Activated T-helper 1 cell treated with anti-CD3 and anti-CD28 coated beads, Interleukin-12 subunit alpha, Interleukin-12 subunit beta, Interleukin-2, Interleukin-4 antibody, amounts not matched to agents 30 ng/mL and 10 ng/mL and 1 ng/mL, durations not matched to agents 14 hours and 24 hours and 36 hours (primary cell): ENCODE measurements at regions of chr17 and their contacts with region 1.

Region 1: DNA sequence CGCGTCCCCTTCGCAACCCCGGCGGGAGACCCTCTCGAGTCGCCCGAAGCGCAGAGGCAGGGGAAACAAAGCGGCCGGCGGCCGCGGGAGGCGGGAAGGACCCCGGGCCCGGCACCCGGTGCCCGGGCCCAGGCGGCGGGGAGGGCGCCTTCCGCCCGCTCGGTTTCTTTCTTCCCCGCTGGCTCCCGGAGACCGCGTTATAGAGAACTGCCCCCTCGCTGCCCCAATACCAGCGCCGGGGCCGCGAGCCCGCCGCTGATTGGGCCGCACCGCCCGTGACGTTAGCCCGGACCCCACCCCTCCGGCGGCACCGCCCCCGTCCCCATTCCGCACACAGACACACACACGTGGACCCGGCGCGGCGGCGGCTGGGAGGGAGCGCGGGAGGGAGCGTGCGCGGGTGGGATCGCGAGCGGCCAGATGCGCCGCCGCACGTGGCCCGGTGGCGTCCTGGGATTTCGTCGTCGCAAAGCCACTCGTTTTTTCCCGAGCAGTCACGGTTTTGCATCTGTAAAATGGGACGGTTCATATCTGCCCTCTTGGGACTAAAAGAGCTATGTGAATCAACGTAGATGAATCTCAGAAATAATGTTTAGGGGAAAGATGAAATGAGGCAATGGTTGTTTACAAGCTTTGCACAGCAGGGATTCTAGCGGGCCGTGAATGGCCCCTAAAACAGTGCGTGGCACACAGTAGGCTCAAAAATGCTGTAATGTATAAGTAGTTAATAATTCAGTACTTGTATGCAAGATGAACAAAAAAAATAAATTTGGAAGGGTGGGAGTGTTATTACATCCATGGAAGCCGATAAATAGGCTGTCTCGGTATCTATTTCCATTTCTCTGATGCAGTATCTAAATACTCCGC is at the start of gene EPOP:
- DNase-seq: peak; percentile 90
- H3K4me3 Mint-ChIP-seq: peak within 1 kb of the TSS; percentile 71
- H3K27ac Mint-ChIP-seq: peak within 1 kb of the TSS; percentile 86
- H3K4me1 Mint-ChIP-seq: peaks cover 45% of the 10 kb centered on the region
- H3K27me3 Mint-ChIP-seq: peaks cover 22% of the 10 kb centered on the region
- total RNA-seq, gene EPOP: 56.5 and 58.8 TPM in 2 replicates

Region 2: DNA sequence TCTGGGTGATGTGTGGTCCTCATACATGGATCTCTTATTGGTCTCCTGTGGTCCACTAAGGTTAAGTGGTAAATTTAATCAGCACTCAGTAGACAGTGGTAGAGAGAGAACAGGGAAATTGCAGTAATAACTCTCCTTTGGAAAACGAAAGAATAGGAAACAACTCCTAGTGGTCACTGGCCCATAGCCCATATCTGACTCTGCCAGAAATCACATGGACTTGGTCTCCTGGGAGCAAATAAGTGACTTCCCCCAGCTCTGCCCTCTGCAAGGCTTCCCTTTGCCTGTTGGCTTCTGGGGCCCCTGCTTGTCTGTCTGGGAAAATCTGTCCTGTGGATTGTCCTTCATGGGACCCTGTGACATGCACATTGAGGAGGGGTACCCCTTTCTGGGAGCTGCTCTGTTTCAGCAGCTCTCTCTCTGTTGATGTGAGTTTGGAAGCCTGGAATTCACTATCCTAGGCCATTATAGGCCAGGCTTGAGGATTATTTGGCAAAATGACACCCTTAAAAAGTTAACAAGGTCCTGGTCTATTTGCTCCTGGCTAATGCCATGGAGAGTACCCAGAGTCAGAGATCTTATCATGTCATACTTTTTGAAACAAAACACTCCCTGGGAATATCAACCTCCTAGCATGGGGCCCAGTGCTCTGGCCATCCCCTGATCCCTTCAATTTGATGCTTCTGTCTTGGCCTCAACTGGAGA is 872.1 kb before region 1 on chr17:
- intact Hi-C with region 1: no loop called
- DNase-seq: no peak
- H3K4me3 Mint-ChIP-seq: no peak overlapping the region
- H3K27ac Mint-ChIP-seq: no peak overlapping the region
- H3K4me1 Mint-ChIP-seq: no peaks in the 10 kb centered on the region
- H3K27me3 Mint-ChIP-seq: peaks cover 14% of the 10 kb centered on the region

Region 3: DNA sequence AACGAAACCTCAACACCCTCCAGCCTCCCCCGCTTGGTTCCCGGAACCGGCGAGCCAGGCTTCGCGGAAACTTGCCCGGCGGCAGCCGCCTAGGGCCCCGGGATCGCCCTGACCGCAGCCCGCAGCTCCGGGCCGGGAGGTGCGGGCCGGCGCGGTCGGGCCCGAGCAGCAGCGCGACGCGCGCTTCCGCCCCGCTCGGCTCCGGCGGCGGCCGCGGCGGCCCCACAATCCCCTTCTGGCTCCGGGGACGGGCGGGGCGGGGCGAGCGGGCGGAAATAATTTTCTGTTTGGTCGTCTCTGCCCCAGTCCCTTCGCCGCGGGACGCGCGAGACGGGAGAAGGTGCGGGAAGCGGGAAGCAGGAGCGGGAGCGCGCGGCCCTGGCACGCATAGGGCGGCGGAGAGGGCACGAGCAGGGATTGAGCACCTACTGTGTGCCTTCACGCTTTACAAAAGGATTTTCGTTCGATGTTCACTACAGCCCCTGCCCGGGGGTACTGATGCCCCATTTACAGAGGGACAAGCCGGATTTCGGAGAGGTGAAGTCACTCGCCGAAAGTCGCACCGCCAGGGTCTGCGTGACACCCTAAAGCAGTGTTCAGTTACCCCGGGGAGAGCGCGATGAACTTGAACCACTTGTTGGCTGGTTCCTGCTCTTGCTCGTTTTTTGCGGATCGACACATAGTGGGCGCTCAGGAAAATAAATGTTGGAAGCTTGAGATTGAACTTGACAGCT is 27.4 kb after region 1 on chr17:
- intact Hi-C with region 1: loop called (anchors 1 kb)
- DNase-seq: peak; percentile 75
- H3K4me3 Mint-ChIP-seq: peak overlapping the region; percentile 97
- H3K27ac Mint-ChIP-seq: peak overlapping the region; percentile 99
- H3K4me1 Mint-ChIP-seq: peaks cover 65% of the 10 kb centered on the region
- H3K27me3 Mint-ChIP-seq: no peaks in the 10 kb centered on the region

Region 4: DNA sequence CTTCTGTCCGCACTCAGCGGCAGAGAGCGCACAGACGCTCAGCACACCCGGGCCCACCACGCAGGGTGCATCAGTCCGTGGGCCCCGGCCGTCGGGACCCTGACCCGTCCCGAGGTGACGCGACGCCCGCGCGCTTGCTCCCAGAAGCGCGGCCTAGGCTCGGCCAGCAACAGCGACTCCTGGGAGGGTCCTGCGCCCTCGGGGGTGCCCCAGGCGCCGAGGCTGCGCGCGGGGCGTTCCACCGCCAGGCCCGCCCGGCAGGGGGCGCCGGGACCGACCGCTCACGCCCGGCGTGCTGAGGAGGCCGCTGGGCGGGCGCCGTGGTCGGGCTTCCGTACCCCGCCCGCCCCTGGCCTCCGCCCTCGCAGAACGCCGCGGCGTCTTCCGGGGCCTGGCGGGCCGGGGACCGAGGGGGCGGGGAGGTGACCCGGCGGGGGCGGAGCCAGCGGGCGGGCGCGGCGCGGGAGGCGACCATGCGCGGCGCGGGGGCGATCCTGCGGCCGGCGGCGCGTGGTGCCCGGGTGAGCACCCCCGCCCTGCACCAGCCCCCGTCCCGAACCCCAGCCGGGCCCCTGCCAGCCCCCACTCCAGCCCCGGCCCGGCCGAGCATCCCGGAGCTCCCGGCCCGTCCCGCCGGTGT is 55.0 kb after region 1 on chr17 and contains the start of gene CISD3:
- intact Hi-C with region 1: loop called (anchors 1 kb)
- DNase-seq: peak; percentile 88
- H3K4me3 Mint-ChIP-seq: peak within 1 kb of the TSS; percentile 94
- H3K27ac Mint-ChIP-seq: peak within 1 kb of the TSS; percentile 97
- H3K4me1 Mint-ChIP-seq: peaks cover 82% of the 10 kb centered on the region
- H3K27me3 Mint-ChIP-seq: peaks cover 2% of the 10 kb centered on the region
- total RNA-seq, gene CISD3: 39.2 and 41.4 TPM in 2 replicates

Region 5: DNA sequence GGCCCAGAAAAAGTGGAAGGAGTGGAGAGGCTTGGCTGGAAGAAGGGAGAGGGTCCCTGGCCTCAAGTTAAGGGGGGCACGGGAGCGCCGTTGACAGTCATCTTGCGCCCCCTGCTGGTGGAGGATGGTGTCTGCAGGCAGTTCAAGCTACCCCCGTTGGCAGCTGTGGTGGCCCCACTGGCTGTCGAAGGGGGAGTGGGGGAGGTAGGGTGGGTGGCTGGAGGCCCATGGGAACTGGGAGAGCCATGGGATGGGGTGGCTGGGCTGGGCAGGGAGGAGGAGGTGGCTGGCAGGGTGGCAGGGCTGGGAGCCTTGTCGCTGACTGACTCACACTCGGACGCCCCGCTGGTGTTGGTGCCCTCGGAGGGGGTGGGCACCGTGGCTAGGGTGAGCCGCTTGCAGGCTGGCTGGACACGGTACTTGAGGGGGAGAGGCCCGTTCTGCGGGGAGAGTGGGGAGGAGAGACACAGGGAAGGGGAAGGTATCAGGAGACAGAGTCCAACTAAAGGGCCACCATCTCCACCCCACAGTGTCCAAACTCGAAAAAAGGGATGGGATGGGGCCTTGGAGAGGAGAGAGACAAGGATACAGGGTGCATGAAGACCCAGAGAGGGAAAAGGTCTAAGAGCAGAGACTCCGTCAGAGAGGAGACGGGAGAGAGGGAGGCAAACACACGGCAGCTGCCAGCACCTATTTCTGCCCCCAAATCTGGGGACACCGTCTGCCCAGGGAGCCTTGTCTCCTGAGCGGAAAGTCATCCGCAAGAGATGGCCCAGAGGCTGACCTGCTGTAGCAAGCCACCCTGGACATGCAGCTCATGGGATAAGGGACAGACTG is 60.4 kb after region 1 on chr17:
- intact Hi-C with region 1: loop called (anchors 1 kb)
- DNase-seq: peak; percentile 59
- H3K4me3 Mint-ChIP-seq: no peak overlapping the region
- H3K27ac Mint-ChIP-seq: peak overlapping the region; percentile 61
- H3K4me1 Mint-ChIP-seq: peaks cover 49% of the 10 kb centered on the region
- H3K27me3 Mint-ChIP-seq: peaks cover 2% of the 10 kb centered on the region

Region 6: GRCh38 chr17:38799378-38800236 is 124.6 kb after region 1 on chr17 and contains the start of gene PIP4K2B:
- intact Hi-C with region 1: loop called (anchors 2 kb)
- DNase-seq: peak; percentile 85
- H3K4me3 Mint-ChIP-seq: peak within 1 kb of the TSS; percentile 93
- H3K27ac Mint-ChIP-seq: peak within 1 kb of the TSS; percentile 93
- H3K4me1 Mint-ChIP-seq: peaks cover 33% of the 10 kb centered on the region
- H3K27me3 Mint-ChIP-seq: no peaks in the 10 kb centered on the region
- total RNA-seq, gene PIP4K2B: 40.6 and 40.8 TPM in 2 replicates

Region 7: DNA sequence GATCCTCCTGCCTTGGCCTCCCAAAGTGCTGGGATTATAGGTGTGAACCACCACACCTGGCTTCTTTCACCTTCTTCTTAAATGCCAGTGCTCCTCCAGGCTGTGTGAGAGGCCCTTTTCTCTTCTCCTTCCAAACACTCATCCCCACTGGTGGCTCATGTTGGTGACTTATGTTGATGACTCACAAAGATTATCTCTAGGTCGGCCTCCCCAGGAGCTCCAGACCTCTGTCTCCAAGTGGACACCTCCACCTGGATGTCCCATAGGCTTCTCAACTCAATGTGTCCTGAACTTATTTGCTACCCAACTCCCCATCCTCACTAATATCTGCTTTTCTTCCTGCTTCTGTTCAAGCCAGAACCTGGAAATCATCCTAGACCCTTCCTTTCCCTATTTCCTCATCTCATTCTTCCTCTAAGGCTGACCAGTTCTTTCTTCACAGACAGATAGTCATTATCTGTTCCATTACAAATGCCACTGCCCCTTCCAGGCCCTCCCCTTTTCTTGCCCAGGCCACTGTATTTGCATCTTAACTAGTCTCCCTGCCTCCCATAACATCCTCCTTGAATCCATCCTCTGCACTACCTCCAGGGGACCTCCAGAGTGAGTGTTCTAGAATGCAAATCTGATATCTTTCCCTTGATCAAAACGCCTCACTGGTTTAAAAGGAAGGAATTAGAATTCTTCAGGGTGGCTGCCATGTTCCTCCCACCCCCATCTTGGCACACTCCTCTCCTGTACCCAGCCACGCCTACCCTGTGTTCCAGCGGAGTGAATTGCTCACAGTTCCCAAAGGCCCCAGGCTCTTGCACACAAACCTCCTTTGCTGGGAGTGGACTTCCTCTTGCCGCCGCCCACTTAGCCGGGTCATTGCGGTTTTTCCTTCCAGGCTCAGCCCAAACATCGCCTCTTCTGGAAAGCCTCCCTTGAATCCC is 327.0 kb after region 1 on chr17:
- intact Hi-C with region 1: no loop called
- DNase-seq: no peak
- H3K4me3 Mint-ChIP-seq: no peak overlapping the region
- H3K27ac Mint-ChIP-seq: no peak overlapping the region
- H3K4me1 Mint-ChIP-seq: peaks cover 21% of the 10 kb centered on the region
- H3K27me3 Mint-ChIP-seq: peaks cover 9% of the 10 kb centered on the region